Dorsolateral prefrontal cortex (tissue), 120 donors: ENCODE measurements at regions of chr3 and their contacts with region 1.

Region 1: GRCh38 chr3:182609575-182610156 is 183.6 kb upstream of the ATP11B start:
- DNase-seq: no peak
- H3K4me3 ChIP-seq: no peak overlapping the region
- H3K27ac ChIP-seq: no peak overlapping the region
- H3K27me3 ChIP-seq: no peaks in the 10 kb centered on the region
- CTCF ChIP-seq: no peak

Region 2: GRCh38 chr3:182276512-182276911 is 333.2 kb before region 1 on chr3:
- intact Hi-C with region 1: loop called in 1 of 2 experiments (anchors 10 kb)
- DNase-seq: no peak
- H3K4me3 ChIP-seq: no peak overlapping the region
- H3K27ac ChIP-seq: no peak overlapping the region
- H3K27me3 ChIP-seq: peaks cover 0 to 11% (median 0%) of the 10 kb centered on the region in 45 donors
- CTCF ChIP-seq: no peak

Region 3: DNA sequence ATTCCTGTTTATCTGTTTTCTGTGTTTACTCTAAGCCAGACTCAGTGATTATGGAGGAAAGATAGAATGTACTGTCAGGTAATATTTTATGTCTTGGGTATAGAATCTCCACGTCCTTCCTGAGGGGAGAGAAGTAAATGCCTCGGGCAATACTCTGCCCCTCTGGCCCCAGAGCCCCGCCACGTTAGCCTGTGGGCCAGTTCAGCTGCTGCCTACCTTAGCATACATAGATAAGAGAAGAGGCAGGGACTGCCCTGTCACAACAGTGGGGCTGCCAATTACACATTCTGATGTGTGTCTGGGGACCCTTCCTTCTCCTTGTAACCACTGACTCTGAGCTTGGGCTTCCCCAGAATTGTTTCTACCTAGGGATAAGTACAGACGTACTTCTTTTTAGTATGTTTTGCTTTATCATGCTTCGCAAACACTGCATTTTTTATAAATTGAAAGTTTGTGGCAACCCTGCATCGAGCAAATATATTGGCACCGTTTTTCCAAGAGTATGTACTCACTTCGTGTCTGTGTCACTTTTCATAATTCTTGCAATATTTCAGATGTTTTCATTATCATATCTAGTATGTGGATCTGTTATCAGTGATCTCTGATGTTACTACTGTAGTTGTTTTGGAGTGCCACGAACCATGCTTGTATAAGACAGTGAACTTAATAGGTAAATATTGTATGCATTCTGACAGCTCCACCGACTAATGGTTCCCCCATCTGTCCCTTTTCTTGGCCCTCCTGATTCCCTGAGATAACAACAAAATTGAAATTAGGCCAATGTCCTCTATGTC is 163.9 kb before region 1 on chr3:
- intact Hi-C with region 1: no loop called
- DNase-seq: no peak
- H3K4me3 ChIP-seq: no peak overlapping the region
- H3K27ac ChIP-seq: no peak overlapping the region
- H3K27me3 ChIP-seq: no peaks in the 10 kb centered on the region
- CTCF ChIP-seq: no peak

Region 4: DNA sequence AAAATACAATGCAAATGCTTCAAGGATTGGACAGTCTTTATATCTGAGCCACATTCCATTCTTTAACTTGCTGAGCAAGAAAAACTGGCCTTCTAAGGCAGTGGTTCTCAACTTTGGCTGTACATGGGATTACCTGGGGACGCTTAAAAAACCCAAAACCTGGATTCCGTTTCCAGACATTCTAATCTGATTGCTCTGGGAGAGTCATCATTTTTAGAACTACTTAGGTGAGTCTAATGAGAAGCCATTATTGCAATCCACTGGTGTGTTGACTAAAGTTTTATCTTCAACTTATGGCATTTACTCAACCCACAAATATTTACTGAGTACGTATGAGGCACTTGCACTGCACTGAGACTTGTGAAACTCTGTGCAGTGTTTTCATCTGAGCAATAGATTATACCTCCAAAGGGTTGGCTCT is 12.0 kb before region 1 on chr3:
- intact Hi-C with region 1: no loop called
- DNase-seq: no peak
- H3K4me3 ChIP-seq: peak overlapping the region in 1 of 59 donors; percentile 7
- H3K27ac ChIP-seq: no peak overlapping the region
- H3K27me3 ChIP-seq: peaks cover 0 to 4% (median 0%) of the 10 kb centered on the region in 45 donors
- CTCF ChIP-seq: no peak

Region 5: GRCh38 chr3:182717216-182717615 is 107.5 kb after region 1 on chr3:
- intact Hi-C with region 1: no loop called
- DNase-seq: no peak
- H3K4me3 ChIP-seq: no peak overlapping the region
- H3K27ac ChIP-seq: no peak overlapping the region
- H3K27me3 ChIP-seq: no peaks in the 10 kb centered on the region
- CTCF ChIP-seq: no peak

Region 6: DNA sequence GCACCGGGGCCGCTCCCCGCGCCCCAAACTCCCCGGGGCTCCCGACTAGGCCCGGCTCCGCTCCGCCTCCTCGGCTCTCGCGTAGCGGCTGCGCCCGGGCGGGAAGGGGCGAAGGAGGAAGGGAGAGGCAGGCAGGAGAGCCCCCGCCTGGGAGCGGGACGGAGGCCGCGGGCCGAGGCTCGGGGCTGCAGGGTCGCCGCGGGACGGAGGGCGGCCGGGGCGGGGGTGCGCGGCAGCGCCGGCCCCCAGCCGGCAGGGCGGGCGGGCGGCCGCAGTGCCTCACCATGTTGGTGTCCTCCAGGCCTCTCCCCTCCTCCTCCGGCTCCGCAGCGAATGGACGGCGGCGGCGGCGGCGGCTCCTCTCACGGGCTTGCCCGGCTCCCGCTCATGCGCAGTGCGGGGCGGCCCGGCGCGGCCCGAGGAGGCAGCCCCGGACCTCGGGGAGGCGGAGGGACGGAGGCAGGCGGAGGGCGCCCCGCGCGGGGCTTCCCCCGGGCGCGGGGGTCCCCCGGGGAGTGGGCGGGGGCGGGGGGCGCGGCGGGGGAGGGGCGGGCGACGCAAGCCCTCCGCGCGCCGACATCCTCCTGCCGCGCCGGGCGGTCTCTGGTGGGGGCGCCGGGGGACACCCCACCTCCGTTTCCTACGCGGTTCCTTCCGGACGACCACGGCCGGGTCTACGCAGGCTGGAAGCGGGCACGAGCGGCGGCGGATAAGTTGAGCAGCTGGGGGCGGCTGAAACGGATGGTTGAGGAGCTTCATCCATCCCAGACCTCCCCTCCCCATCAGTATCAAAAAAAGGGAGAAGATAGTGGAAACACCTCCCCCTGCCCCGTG is 370.8 kb after region 1 on chr3 and contains the start of gene DCUN1D1:
- intact Hi-C with region 1: no loop called
- DNase-seq: peak; percentile 75 to 93 (median 86)
- H3K4me3 ChIP-seq: peak within 1 kb of the TSS; percentile 65 to 97 (median 91)
- H3K27ac ChIP-seq: peak within 1 kb of the TSS; percentile 75 to 97 (median 92)
- H3K27me3 ChIP-seq: no peaks in the 10 kb centered on the region
- CTCF ChIP-seq: peak in 5 of 56 donors; percentile 3 to 23 (median 7)
- total RNA-seq, gene DCUN1D1: 49.4 to 86.8 (median 66.2) TPM